ENCODE measurements at regions of chr6 and their contacts with region 1.

Region 1: DNA sequence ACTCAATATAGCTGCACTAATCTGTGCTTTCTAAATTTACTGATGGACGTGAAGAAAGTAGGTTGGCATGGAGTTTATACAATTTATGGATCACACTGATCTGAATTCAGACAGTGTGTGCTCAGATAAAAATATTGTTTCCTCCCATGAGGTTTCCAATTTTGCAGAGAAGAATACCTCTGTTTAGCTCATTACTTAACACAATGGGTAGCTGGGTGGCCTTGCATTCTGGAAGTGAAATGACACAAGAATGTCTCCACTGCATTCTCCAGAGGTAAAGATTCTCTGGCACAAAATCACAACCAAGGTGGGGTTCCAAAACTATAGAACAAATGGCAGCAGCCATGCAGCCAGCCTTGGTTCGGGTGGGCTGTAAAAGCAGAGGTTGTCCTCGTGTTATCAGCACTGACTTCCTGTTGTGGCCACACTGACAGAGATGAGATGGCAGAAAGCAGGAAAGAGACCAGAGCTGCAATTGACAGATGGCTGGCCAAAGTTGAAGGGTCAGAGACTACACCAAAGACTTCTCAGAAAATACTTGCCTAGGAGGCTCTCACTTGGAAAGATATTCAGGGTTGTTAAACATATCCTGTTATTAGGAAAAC is 50.2 kb downstream of the HDAC2 start:
- DNase-seq: no peak
- ATAC-seq: no peak
- H3K4me3 ChIP-seq: no peak overlapping the region
- H3K27ac ChIP-seq: no peak overlapping the region
- H3K4me1 ChIP-seq: no peaks in the 10 kb centered on the region
- H3K27me3 ChIP-seq: no peaks in the 10 kb centered on the region
- CTCF ChIP-seq: no peak
- POLR2A ChIP-seq: no peak
- RAD21 ChIP-seq: no peak

Region 2: GRCh38 chr6:113970805-113971676 is 50.3 kb after region 1 on chr6 and contains the start of gene HDAC2:
- CTCF ChIA-PET with region 1: no interaction called
- POLR2A ChIA-PET with region 1: no interaction called
- RAD21 ChIA-PET with region 1: no interaction called
- intact Hi-C with region 1: loop called (anchors 2 kb)
- DNase-seq: peak; percentile 79
- ATAC-seq: peak; percentile 82
- H3K4me3 ChIP-seq: peak within 1 kb of the TSS; percentile 74 to 93
- H3K27ac ChIP-seq: peak within 1 kb of the TSS; percentile 90
- H3K4me1 ChIP-seq: peaks cover 3 to 24% of the 10 kb centered on the region in 2 experiments; a peak in 3 of 4 replicates
- H3K27me3 ChIP-seq: no peaks in the 10 kb centered on the region
- CTCF ChIP-seq: no peak; a peak in 1 of 6 replicates
- POLR2A ChIP-seq: peak; percentile 63
- RAD21 ChIP-seq: no peak
- total RNA-seq, gene HDAC2: 153 TPM